ENCODE measurements at regions of chr2 and their contacts with region 1.

Region 1: DNA sequence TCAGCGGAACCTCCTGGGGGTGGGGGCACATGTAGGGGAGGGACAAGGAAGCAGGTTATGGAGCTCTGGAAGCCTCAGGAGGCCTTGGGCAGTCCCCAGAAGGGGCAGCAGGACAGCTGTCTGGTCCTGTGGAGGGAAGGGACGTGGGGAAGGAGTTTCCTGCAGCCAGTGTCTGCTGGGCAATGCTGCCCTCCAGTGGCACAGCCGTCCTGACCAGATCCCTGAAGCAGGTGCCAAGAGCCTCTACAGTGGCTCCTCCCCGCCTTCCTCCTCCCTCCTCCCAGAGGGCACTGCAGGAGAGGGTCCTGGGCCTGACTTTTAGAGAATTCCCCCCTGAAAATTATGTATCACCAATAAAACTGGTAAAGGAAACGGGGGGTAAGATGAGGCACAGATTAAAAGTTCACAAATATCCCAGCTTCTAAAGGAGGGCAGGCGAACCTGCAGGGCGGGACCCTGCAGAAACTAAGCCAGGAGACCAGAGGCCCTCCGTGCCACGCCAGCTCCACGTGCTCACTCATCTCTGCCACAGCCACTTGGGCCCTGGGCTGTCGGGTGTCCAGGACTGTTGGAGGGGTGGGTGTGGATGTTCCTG is 258.5 kb downstream of the TWIST2 start:
- DNase-seq: peak; percentile 69 to 98 (median 86)

Region 2: GRCh38 chr2:239035361-239036078 is 70.9 kb before region 1 on chr2:
- intact Hi-C with region 1: loop called (anchors 1 kb)
- DNase-seq: peak in 8 of 10 donors; percentile 49 to 95 (median 76)